Posterior vena cava (tissue), 2 donors: ENCODE measurements at regions of chr13 and their contacts with region 1.

Region 1: GRCh38 chr13:98542568-98543377 is 34.1 kb downstream of the STK24 start:
- DNase-seq: no peak

Region 2: GRCh38 chr13:98484289-98485219 is 58.2 kb before region 1 on chr13:
- intact Hi-C with region 1: loop called in 1 of 2 experiments (anchors 10 kb)
- DNase-seq: peak; percentile 92

Region 3: GRCh38 chr13:98523455-98524102 is 19.2 kb before region 1 on chr13:
- intact Hi-C with region 1: loop called in 1 of 2 experiments (anchors 2 kb)
- DNase-seq: no peak